Transverse colon (tissue), 4 donors: ENCODE measurements at regions of chr9 and their contacts with region 1.

Region 1: DNA sequence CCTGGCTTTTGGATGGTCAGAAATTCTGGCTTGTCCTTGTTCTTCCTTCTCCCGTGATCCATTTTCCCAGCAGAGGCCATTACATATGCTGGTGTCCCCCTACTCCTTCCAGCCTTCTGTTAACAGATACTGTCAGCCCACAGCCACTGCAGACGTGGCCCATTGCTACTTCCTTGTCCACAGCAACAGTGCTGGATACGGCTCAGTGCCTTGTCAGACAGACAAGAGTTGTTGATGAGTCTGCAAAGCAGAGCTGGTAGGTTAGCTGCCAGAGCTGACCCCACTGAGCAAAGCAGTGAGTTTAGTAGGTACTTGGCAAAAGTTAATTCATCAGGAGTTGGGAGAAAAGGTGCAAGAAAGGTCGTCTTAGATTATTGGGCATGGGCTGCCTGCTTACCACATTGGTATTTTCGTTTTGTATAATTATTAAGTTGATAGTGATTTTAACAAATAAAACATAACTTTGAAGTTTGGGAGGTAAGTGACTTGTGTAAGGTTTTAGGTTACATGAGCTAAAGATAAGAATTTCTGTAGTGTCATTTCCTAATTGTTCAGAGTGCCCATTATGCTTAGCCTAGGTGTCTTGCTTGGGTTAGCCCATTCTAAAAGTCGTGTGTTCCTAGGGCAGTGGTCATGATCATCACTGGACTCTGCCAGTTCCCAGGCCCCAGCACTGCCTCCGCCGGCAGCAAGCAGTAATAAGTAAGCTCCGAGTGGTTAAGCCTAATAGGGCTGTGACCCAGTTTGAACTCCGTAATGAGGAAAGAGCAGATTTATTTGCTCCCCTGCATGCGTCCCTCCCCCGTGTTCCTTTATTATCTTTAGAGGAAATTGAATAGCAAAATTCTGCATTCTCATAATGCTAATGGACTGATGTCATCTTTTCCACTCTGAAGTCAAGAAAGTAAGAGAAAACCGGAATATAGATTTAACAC is 292.0 kb downstream of the FANCC start:
- DNase-seq: peak; percentile 62
- H3K4me3 ChIP-seq: no peak overlapping the region
- H3K27ac ChIP-seq: peak overlapping the region; percentile 60 to 78 (median 74)
- H3K4me1 ChIP-seq: peaks cover 31 to 88% (median 58%) of the 10 kb centered on the region in 4 donors
- H3K27me3 ChIP-seq: no peaks in the 10 kb centered on the region
- CTCF ChIP-seq: peak; percentile 28 to 51 (median 33)
- EP300 ChIP-seq: no peak
- POLR2A ChIP-seq: no peak

Region 2: DNA sequence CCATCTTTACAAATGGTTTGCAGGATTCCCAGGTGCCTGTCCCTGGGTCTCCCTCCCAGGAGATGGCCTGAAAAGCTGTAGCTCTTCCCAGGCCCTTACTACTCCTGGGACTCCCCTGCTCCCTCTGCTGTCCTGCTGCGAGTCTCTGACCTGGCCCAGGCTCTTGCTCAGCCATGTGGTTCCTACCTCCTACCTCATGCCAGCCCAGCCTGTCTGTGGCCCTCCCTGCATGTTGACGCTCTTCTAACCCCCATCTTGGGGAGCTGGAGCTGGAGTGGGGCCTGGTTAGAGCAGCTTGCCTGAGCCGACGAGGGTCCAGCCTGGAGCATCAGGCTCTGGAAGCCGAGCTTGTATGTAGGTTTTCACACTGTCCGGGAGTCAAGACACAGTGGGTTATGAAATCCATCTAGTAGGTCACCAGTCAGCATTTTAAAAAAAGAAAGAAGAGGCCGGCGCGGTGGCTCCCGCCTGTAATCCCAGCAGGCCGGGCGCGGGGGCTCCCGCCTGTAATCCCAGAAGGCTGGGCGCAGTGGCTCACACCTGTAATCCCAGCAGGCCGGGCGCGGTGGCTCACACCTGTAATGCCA is 47.6 kb after region 1 on chr9:
- in situ Hi-C with region 1: no loop called
- intact Hi-C with region 1: loop called (anchors 10 kb)
- DNase-seq: no peak
- H3K4me3 ChIP-seq: no peak overlapping the region
- H3K27ac ChIP-seq: peak overlapping the region; percentile 33 to 66 (median 51)
- H3K4me1 ChIP-seq: peaks cover 35 to 79% (median 68%) of the 10 kb centered on the region in 4 donors
- H3K27me3 ChIP-seq: no peaks in the 10 kb centered on the region
- CTCF ChIP-seq: peak in 2 of 5 experiments; percentile 10 to 20
- EP300 ChIP-seq: no peak
- POLR2A ChIP-seq: no peak

Region 3: GRCh38 chr9:95721061-95721531 is 695.6 kb after region 1 on chr9:
- in situ Hi-C with region 1: no loop called
- intact Hi-C with region 1: no loop called
- DNase-seq: peak; percentile 64
- H3K4me3 ChIP-seq: no peak overlapping the region
- H3K27ac ChIP-seq: peak overlapping the region in 3 of 4 donors; percentile 42 to 67 (median 63)
- H3K4me1 ChIP-seq: peaks cover 0 to 52% (median 23%) of the 10 kb centered on the region in 4 donors
- H3K27me3 ChIP-seq: no peaks in the 10 kb centered on the region
- CTCF ChIP-seq: no peak
- EP300 ChIP-seq: no peak
- POLR2A ChIP-seq: no peak